ENCODE measurements at regions of chr19 and their contacts with region 1.

Region 1: DNA sequence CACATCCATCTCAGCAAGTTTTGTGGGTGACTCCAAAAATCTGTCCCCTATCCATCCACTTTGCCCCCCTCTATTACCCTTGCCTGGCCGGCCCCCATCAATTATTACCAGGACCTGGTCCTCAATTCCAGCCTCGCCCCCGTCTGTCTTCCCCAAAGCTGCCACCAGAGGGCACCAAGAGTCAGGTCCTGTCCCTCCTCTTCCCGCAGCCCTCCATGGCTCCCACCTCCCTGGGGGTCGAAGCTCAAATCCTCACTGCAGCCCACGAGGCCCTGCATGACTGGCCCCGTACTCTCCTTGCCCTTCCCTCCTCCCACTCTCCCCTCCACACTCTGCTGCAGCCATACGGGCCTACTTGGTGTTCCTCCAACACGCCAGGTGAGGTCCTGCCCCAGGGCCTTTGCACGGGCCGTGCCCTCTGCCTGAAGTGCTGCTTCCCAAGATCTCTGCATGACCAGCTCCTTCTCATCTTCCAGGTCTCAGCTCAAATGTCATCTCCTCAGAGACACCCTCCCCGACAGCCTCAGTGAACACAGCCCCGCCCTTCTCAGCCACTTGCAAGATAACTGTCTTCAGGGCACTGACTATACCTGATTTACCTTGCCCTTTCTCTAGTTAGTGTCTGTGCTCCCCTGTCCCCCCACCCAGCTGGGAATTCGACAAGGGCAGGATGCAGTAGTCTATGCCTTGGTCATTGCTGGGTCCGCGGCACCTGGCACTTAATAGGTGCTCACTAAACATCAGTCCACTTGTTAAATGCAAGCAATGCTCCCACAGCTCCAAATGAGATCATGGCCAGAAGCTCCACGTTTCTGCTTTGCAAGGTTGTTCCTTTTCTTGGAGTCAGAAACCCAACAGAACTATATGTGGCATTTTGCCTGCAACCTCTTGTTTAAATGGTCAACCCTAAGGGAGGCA is 16.8 kb upstream of the SEMA6B start:
- DNase-seq: peak; percentile 71
- H3K4me3 Mint-ChIP-seq: no peak overlapping the region
- H3K27ac Mint-ChIP-seq: no peak overlapping the region
- H3K4me1 Mint-ChIP-seq: peaks cover 16% of the 10 kb centered on the region
- H3K27me3 Mint-ChIP-seq: no peaks in the 10 kb centered on the region
- CTCF ChIP-seq: peak; percentile 70

Region 2: DNA sequence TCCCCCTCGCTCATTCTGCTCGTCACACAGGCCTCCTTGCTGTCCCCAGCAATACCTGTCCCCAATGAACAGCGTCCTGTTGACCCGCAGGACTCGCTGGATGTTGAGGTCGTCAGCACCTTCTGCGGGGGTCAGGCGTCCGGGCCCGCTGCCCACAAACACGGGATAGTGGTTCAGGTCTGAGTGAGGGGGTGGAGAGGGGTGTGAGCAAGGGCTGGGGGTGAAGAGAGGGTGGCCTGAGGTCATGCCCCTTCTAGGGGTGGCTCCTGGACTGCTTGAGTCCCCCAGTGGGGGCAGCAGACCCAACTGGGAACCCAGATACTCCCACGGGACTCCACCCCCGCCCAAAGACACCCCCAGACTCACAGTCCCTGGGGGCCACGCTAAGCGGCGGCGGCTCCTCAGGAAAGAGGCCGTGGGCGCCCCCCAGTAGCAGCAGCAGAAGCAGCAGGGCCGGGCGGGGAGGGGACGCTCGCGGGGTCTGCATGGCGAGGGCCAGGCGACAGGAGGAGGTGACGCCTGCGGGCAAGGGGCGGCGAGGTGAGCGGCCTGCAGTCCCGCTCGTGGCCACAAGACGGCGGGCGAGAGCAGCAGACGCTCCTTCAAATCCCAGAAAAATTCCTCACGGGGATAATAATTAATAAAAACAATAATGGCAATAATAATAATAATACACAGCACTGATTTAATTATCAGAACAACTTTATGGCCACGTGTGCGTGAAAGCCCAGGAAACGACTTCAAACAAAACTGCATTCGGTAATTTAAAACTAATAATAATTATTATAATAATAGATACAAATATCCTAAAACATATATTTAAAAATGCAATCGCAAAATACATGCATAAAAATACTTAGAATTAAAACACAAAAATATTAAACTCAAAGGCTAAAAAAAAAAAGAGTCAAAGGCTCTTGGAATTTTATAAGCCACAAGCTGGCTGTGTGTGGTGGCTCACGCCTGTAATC is 18.0 kb before region 1 on chr19:
- CTCF ChIA-PET with region 1: interaction called, 10 read pairs
- POLR2A ChIA-PET with region 1: no interaction called
- intact Hi-C with region 1: no loop called
- DNase-seq: peak; percentile 31
- H3K4me3 Mint-ChIP-seq: no peak overlapping the region
- H3K27ac Mint-ChIP-seq: no peak overlapping the region
- H3K4me1 Mint-ChIP-seq: no peaks in the 10 kb centered on the region
- H3K27me3 Mint-ChIP-seq: peaks cover 3% of the 10 kb centered on the region
- CTCF ChIP-seq: peak; percentile 99

Region 3: GRCh38 chr19:4624733-4625362 is 48.6 kb after region 1 on chr19:
- CTCF ChIA-PET with region 1: interaction called, 10 read pairs
- POLR2A ChIA-PET with region 1: no interaction called
- intact Hi-C with region 1: no loop called
- DNase-seq: peak; percentile 55
- H3K4me3 Mint-ChIP-seq: no peak overlapping the region
- H3K27ac Mint-ChIP-seq: no peak overlapping the region
- H3K4me1 Mint-ChIP-seq: no peaks in the 10 kb centered on the region
- H3K27me3 Mint-ChIP-seq: peaks cover 11% of the 10 kb centered on the region
- CTCF ChIP-seq: peak; percentile 15

Region 4: GRCh38 chr19:4633140-4633967 is 57.1 kb after region 1 on chr19:
- CTCF ChIA-PET with region 1: interaction called, 57 read pairs
- POLR2A ChIA-PET with region 1: interaction called, 9 read pairs
- intact Hi-C with region 1: loop called (anchors 1 kb)
- DNase-seq: peak; percentile 79
- H3K4me3 Mint-ChIP-seq: no peak overlapping the region
- H3K27ac Mint-ChIP-seq: no peak overlapping the region
- H3K4me1 Mint-ChIP-seq: peaks cover 18% of the 10 kb centered on the region
- H3K27me3 Mint-ChIP-seq: no peaks in the 10 kb centered on the region
- CTCF ChIP-seq: peak; percentile 86